Activated naive CD4-positive, alpha-beta T cell treated with anti-CD3 and anti-CD28 coated beads for 36 hours (primary cell): ENCODE measurements at regions of chr4 and their contacts with region 1.

Region 1: DNA sequence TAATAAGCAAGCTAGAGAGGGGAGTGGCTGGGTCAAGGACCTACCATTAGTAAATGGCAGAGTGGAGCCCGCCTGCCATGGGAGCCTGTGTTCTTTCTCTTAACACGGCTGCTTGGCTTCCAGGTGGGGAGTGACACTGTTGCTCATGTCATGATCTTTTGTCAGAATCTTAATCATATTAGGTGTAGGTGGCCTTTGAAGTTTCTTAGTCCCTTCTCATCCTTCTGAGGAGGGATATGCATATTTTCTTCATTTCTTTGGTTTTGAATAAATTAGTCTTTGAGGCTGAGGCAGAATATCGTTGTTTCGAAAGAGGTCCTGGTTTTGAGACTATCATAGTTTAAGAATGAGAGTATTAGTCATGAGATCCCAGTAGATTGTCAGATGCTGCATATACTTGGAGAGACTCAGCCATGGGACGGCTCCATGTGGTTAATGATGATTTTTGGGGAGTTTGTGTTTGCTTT is 28.9 kb downstream of the SNX25 start:
- DNase-seq: peak; percentile 69
- H3K4me3 Mint-ChIP-seq: peak overlapping the region; percentile 51
- H3K27ac Mint-ChIP-seq: peak overlapping the region; percentile 83
- H3K4me1 Mint-ChIP-seq: peaks cover 34% of the 10 kb centered on the region
- H3K27me3 Mint-ChIP-seq: no peaks in the 10 kb centered on the region

Region 2: GRCh38 chr4:185203486-185204237 is 34.6 kb before region 1 on chr4 and contains the start of gene CFAP97:
- CTCF ChIA-PET with region 1: no interaction called
- intact Hi-C with region 1: loop called (anchors 1 kb)
- DNase-seq: peak; percentile 73
- H3K4me3 Mint-ChIP-seq: peak within 1 kb of the TSS; percentile 96
- H3K27ac Mint-ChIP-seq: peak within 1 kb of the TSS; percentile 96
- H3K4me1 Mint-ChIP-seq: peaks cover 32% of the 10 kb centered on the region
- H3K27me3 Mint-ChIP-seq: no peaks in the 10 kb centered on the region
- total RNA-seq, gene CFAP97: 38.4 to 43.6 TPM

Region 3: DNA sequence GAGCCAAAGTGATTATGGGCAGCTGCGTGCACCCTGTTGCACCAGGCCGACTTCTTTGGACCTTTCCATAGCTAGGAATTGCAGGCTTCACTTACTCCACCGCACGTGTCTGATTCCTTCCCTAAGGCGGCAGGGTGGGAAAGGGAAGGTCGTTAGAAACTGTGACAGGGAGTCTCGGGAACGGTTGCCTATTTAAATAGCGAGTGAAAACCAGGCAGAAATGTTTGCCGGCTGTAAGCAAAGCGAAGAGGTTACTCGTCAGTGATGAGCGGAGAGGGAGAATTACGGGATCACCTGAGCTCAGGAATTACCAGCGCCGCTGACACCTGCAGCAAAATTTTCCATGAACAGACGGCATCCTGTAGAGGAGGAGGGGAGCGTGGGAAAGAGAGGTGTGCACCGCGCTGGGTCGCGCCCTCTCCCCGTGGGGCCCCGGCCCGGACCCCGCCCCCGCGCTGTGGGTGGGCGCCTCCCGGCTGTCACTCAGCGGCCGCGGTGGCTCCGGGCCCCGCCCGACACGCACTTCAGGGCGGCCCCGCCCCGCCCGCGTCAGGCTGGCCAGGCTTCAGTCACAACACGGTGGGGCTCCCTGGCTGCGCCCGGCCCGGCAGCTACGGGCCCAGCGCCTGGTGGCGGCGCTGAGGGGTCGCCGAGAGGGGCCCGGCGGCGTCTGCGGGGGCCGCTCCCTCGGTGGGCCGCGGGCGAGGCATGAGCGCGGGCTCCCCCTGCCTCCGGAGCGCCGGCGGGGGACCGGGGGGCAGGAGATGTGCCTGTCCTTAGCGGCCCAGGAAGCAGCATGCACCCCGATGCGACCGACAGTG is 29.0 kb before region 1 on chr4 and contains the start of gene SNX25:
- CTCF ChIA-PET with region 1: no interaction called
- intact Hi-C with region 1: loop called (anchors 1 kb)
- DNase-seq: peak; percentile 84
- H3K4me3 Mint-ChIP-seq: peak within 1 kb of the TSS; percentile 84
- H3K27ac Mint-ChIP-seq: peak within 1 kb of the TSS; percentile 71
- H3K4me1 Mint-ChIP-seq: peaks cover 28% of the 10 kb centered on the region
- H3K27me3 Mint-ChIP-seq: no peaks in the 10 kb centered on the region
- total RNA-seq, gene SNX25: 11.0 to 14.6 TPM

Region 4: GRCh38 chr4:185219551-185220344 is 18.5 kb before region 1 on chr4:
- CTCF ChIA-PET with region 1: no interaction called
- intact Hi-C with region 1: loop called (anchors 1 kb)
- DNase-seq: no peak
- H3K4me3 Mint-ChIP-seq: no peak overlapping the region
- H3K27ac Mint-ChIP-seq: no peak overlapping the region
- H3K4me1 Mint-ChIP-seq: peaks cover 26% of the 10 kb centered on the region
- H3K27me3 Mint-ChIP-seq: no peaks in the 10 kb centered on the region

Region 5: GRCh38 chr4:185254434-185254833 is 16.2 kb after region 1 on chr4:
- CTCF ChIA-PET with region 1: interaction called, 6 read pairs
- intact Hi-C with region 1: loop called (anchors 1 kb)
- DNase-seq: no peak
- H3K4me3 Mint-ChIP-seq: no peak overlapping the region
- H3K27ac Mint-ChIP-seq: peak overlapping the region; percentile 32
- H3K4me1 Mint-ChIP-seq: peaks cover 61% of the 10 kb centered on the region
- H3K27me3 Mint-ChIP-seq: no peaks in the 10 kb centered on the region

Region 6: GRCh38 chr4:185384930-185385331 is 146.7 kb after region 1 on chr4:
- CTCF ChIA-PET with region 1: no interaction called
- intact Hi-C with region 1: no loop called
- DNase-seq: no peak
- H3K4me3 Mint-ChIP-seq: no peak overlapping the region
- H3K27ac Mint-ChIP-seq: no peak overlapping the region
- H3K4me1 Mint-ChIP-seq: peaks cover 11% of the 10 kb centered on the region
- H3K27me3 Mint-ChIP-seq: peaks cover 24% of the 10 kb centered on the region

Region 7: DNA sequence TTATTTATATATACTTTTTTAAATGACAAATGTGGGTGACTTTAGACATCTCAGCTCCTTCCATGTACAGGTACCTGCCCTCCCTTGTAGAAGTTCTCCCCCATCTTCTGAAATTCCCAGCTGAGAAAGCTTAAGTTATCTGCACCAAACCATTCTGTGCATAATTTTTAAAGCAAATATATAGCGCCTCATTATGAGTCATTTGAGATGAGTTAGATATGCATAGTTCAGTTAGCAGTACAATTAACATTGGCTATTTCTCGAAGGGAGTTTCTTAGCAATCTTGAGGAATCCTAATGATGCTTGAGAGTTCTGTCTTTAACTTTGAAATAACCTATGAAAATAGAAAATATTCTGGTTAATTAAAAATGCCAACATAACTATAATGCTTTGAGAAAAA is 207.0 kb after region 1 on chr4:
- CTCF ChIA-PET with region 1: no interaction called
- intact Hi-C with region 1: no loop called
- DNase-seq: no peak
- H3K4me3 Mint-ChIP-seq: no peak overlapping the region
- H3K27ac Mint-ChIP-seq: no peak overlapping the region
- H3K4me1 Mint-ChIP-seq: no peaks in the 10 kb centered on the region
- H3K27me3 Mint-ChIP-seq: no peaks in the 10 kb centered on the region